CD8-positive, alpha-beta T cell (primary cell): ENCODE measurements at regions of chr1 and their contacts with region 1.

Region 1: DNA sequence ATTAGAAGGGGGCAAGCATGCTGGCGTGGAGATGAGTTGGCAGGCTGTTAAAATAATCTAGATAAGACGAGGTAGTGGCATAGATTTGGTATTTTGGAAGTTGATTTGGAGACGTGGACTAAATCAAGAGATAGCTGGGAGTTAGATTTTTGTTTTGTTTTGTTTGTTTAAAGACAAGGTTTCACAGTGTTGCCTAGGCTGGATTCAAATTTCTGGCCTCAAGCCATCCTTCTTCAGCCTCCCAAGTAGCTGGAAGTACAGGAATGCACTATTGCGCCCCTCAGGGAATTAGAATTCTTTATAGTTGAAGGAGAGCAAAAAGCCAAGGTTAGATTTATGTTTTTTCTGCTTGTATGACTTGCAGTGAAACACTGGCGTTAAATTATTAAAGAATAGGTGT is 22.3 kb upstream of the SNRPE start:
- DNase-seq: no peak
- ATAC-seq: no peak
- H3K4me3 ChIP-seq: no peak overlapping the region
- H3K4me3 Mint-ChIP-seq: no peak overlapping the region
- H3K27ac ChIP-seq: no peak overlapping the region
- H3K27ac Mint-ChIP-seq: no peak overlapping the region
- H3K4me1 ChIP-seq: no peaks in the 10 kb centered on the region
- H3K4me1 Mint-ChIP-seq: no peaks in the 10 kb centered on the region
- H3K27me3 ChIP-seq: no peaks in the 10 kb centered on the region
- H3K27me3 Mint-ChIP-seq: no peaks in the 10 kb centered on the region
- CTCF ChIP-seq: no peak

Region 2: DNA sequence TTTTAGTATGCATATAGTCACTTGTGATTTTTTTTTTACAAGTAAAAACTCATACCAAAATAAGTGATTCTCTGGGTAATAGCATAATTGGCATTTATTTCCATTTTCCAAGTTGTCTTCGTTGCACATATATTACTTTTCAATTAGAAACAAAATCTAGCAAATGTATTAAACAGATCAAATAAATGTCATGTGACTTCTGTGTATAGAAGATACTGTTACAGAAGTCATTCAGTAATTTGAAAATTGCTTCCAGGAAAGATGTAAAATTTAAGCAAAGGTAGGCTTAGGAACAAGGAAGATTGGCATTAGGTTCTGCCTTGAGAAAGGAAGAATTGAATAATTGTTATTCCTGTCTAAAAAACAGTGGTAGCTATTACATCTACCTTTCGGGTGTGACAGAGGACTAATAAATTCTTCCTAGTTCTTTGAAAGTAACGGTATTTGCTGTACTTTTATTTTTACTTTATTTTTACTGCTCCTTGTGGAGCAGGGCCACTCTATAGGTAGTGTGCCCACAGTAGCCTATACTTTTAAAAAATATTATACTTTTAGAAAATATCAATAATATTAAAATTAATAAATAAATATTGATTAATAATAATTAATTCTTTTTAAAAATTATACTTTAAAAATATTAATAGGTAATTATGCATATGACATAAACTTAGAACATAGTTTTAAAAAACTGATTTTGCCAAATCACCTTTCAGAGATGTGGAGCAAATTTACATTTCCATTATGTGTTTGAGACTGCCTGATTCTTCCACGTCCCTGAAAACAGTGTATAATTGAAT is 13.1 kb before region 1 on chr1:
- CTCF ChIA-PET with region 1: interaction called, 3 read pairs
- POLR2A ChIA-PET with region 1: no interaction called
- intact Hi-C with region 1: loop called in 1 of 2 experiments (anchors 2 kb)
- DNase-seq: no peak
- ATAC-seq: no peak
- H3K4me3 ChIP-seq: no peak overlapping the region
- H3K4me3 Mint-ChIP-seq: no peak overlapping the region
- H3K27ac ChIP-seq: no peak overlapping the region
- H3K27ac Mint-ChIP-seq: no peak overlapping the region
- H3K4me1 ChIP-seq: no peaks in the 10 kb centered on the region
- H3K4me1 Mint-ChIP-seq: peaks cover 35% of the 10 kb centered on the region
- H3K27me3 ChIP-seq: no peaks in the 10 kb centered on the region
- H3K27me3 Mint-ChIP-seq: no peaks in the 10 kb centered on the region
- CTCF ChIP-seq: no peak